Left lung (tissue), 14 donors: ENCODE measurements at regions of chr11 and their contacts with region 1.

Region 1: GRCh38 chr11:118689851-118690552 is 10.6 kb upstream of the TREH start:
- DNase-seq: peak; percentile 84 to 97 (median 96)
- ATAC-seq: peak; percentile 98
- H3K4me3 ChIP-seq: peak overlapping the region; percentile 16 to 37
- H3K27ac ChIP-seq: peak overlapping the region; percentile 67 to 76
- H3K4me1 ChIP-seq: peaks cover 0 to 24% of the 10 kb centered on the region in 2 donors
- H3K27me3 ChIP-seq: no peaks in the 10 kb centered on the region
- CTCF ChIP-seq: peak; percentile 84 to 91

Region 2: GRCh38 chr11:118956094-118956846 is 266.3 kb after region 1 on chr11 and contains the start of gene UPK2:
- intact Hi-C with region 1: loop called in 1 of 2 experiments (anchors 10 kb)
- DNase-seq: peak; percentile 64 to 95 (median 88)
- ATAC-seq: peak; percentile 99
- H3K4me3 ChIP-seq: no peak within 1 kb of the TSS
- H3K27ac ChIP-seq: no peak within 1 kb of the TSS
- H3K4me1 ChIP-seq: no peaks in the 10 kb centered on the region
- H3K27me3 ChIP-seq: peaks cover 0 to 7% of the 10 kb centered on the region in 2 donors
- CTCF ChIP-seq: peak; percentile 97 to 98
- polyA plus RNA-seq, gene UPK2: 2.2 to 4.3 (median 3.5) TPM